Activated B cell treated with CpG ODN at 0.5 μM for 24 hours (primary cell): ENCODE measurements at regions of chr17 and their contacts with region 1.

Region 1: DNA sequence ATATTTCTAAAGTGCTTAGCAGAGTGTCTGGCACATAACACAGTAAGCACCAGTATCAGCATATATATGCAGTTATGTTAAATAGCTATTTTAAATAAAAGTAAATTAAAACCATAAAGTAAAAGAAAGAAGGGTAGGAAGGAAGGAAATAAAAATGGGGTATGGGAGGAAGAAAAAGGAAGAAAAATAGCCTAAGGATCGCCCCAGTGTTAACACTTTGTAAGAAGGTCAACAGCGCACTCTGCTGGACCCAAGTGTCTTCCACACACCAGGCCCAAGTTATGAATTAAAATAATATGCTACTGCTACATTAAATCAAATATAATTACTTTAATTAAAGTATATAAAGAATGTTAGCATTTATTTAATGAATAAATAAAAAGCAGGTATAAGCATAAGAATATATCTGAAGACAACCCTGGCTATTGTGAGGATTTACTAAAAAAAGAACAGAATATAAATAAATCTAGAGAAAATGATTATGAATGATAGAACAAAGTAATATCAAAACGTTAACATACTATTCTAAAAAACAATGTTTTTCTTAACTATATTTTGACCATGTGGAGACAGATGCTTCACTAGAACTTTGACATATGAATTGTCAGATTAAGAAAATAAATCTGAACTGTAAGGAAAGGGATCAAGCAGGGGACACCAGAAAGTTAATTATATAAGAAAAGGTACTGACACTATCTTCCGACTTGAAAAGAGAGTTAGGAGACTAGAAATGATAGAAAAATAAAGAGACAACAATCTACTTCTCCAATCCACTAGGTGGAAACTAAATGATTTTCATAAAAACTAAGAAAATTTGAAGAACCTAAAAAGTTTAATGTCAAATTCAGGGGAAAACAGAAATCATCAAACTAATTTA is 25.9 kb downstream of the BRIP1 start:
- DNase-seq: peak; percentile 22
- ATAC-seq: peak; percentile 62
- H3K4me3 Mint-ChIP-seq: no peak overlapping the region
- H3K27ac Mint-ChIP-seq: no peak overlapping the region
- H3K4me1 Mint-ChIP-seq: no peaks in the 10 kb centered on the region
- H3K27me3 Mint-ChIP-seq: no peaks in the 10 kb centered on the region
- CTCF ChIP-seq: peak; percentile 94

Region 2: DNA sequence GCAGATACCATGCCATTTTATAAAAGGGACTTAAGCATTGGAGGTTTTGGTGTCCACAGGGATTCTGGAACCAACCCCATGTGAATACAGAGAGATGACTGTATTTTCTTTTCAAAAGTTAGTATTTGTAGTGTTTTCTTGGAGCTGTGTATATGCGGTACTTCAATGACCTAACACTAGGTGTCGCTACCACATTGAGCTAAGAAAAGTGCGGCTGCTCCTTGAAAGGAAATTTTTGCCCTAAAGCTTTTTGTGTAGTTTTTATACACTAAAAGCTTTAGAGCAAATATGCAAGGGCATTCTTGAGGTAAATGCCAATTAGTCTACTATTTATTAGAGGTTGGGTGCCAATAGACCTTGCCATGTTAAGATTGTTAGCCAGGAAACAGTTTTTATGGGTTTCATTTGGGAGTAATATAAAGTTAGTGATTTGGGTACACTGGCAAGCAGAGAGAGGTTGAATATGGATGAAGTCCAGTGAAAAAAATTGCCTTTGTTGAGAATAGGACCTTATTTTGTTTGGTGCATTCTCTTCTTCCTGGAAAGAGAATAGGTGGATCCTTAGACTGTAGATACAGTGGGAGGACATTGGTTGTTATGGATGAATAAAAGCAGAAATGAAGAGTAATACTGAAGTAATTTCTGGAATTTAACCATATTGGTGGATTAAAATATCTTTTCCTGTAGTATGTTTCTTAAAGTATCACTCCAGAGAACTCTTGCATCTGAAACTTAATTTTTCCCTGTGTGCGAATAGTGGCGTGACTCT is 1116.5 kb before region 1 on chr17:
- CTCF ChIA-PET with region 1: interaction called, 3 read pairs
- POLR2A ChIA-PET with region 1: no interaction called
- intact Hi-C with region 1: loop called (anchors 2 kb)
- DNase-seq: no peak
- ATAC-seq: no peak
- H3K4me3 Mint-ChIP-seq: no peak overlapping the region
- H3K27ac Mint-ChIP-seq: no peak overlapping the region
- H3K4me1 Mint-ChIP-seq: peaks cover 17% of the 10 kb centered on the region
- H3K27me3 Mint-ChIP-seq: no peaks in the 10 kb centered on the region
- CTCF ChIP-seq: peak; percentile 87

Region 3: DNA sequence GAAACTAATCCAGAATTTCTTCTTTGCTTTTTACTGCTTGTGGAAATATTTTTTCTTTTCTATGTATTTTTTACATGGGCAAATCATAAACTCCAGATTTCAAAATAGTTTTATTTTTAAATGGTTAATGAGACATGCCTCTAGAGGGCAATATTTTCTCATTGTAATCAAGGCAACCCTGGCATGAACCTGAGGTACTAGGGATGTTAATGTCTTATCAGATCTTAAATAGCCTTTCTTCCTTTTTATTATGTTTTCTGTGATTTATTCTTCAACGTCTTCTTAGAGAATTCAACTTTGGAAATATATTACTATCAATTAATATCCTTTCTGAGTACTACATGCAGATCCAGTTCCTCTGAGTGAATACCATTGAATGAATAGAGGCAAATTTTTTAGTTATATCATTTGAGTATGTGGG is 835.1 kb before region 1 on chr17:
- CTCF ChIA-PET with region 1: no interaction called
- POLR2A ChIA-PET with region 1: no interaction called
- intact Hi-C with region 1: loop called (anchors 1 kb)
- DNase-seq: no peak
- ATAC-seq: no peak
- H3K4me3 Mint-ChIP-seq: no peak overlapping the region
- H3K27ac Mint-ChIP-seq: no peak overlapping the region
- H3K4me1 Mint-ChIP-seq: no peaks in the 10 kb centered on the region
- H3K27me3 Mint-ChIP-seq: no peaks in the 10 kb centered on the region
- CTCF ChIP-seq: peak; percentile 35

Region 4: GRCh38 chr17:61635913-61636432 is 201.4 kb before region 1 on chr17:
- CTCF ChIA-PET with region 1: interaction called, 39 read pairs
- POLR2A ChIA-PET with region 1: interaction called, 3 read pairs
- intact Hi-C with region 1: loop called (anchors 1 kb)
- DNase-seq: no peak
- ATAC-seq: no peak
- H3K4me3 Mint-ChIP-seq: no peak overlapping the region
- H3K27ac Mint-ChIP-seq: no peak overlapping the region
- H3K4me1 Mint-ChIP-seq: peaks cover 10% of the 10 kb centered on the region
- H3K27me3 Mint-ChIP-seq: peaks cover 34% of the 10 kb centered on the region
- CTCF ChIP-seq: peak; percentile 70

Region 5: DNA sequence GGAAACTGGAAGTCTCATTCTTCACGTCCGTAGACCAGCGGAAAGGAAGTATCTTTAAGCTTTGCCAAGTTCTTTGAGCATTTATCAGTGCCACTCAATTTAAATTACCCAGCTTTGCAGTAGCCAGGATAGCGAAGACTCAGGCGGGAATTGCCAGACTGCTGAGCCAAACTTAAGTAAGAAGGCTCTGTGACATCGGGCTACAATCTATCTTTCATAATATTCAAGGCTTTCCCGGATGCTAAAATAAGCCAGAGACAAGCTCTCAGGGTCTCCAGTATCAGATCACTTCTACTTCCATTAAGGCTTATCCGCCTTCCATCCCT is 26.4 kb after region 1 on chr17:
- CTCF ChIA-PET with region 1: no interaction called
- POLR2A ChIA-PET with region 1: no interaction called
- intact Hi-C with region 1: no loop called
- DNase-seq: no peak
- ATAC-seq: peak; percentile 20
- H3K4me3 Mint-ChIP-seq: peak overlapping the region; percentile 94
- H3K27ac Mint-ChIP-seq: peak overlapping the region; percentile 83
- H3K4me1 Mint-ChIP-seq: peaks cover 18% of the 10 kb centered on the region
- H3K27me3 Mint-ChIP-seq: no peaks in the 10 kb centered on the region
- CTCF ChIP-seq: no peak

Region 6: DNA sequence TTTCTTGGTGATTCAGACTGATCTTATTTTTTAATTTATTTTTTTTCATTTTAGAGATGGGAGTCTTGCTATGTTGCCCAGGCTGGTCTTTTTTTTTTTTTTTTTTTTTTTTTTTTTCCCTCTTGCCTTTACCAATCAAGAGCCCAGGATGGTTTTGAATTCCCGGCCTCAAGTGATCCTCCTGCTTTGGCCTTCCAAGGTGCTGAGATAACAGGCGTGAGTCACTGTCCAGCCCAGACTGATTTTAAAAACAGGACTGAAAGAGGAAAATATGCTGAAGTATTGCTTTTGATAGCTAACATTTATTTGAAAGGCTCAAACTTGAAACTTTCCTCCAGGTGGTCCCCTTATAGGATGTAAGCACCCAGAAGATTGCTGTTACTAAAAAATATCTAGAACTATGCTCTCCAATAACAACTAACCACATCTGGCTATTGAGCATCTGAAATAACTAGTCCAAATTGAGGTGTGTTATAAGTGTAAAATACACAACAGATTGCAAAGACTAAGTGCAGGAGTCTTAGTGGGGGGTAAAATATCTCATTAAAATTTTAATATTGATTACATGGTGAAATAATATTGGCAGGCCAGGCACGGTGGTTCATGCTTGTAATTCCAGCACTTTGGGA is 41.7 kb after region 1 on chr17:
- CTCF ChIA-PET with region 1: no interaction called
- POLR2A ChIA-PET with region 1: no interaction called
- intact Hi-C with region 1: no loop called
- DNase-seq: no peak
- ATAC-seq: no peak
- H3K4me3 Mint-ChIP-seq: no peak overlapping the region
- H3K27ac Mint-ChIP-seq: no peak overlapping the region
- H3K4me1 Mint-ChIP-seq: no peaks in the 10 kb centered on the region
- H3K27me3 Mint-ChIP-seq: no peaks in the 10 kb centered on the region
- CTCF ChIP-seq: no peak